Activated B cell treated with CpG ODN at 0.5 μM for 24 hours (primary cell): ENCODE measurements at regions of chr16 and their contacts with region 1.

Region 1: DNA sequence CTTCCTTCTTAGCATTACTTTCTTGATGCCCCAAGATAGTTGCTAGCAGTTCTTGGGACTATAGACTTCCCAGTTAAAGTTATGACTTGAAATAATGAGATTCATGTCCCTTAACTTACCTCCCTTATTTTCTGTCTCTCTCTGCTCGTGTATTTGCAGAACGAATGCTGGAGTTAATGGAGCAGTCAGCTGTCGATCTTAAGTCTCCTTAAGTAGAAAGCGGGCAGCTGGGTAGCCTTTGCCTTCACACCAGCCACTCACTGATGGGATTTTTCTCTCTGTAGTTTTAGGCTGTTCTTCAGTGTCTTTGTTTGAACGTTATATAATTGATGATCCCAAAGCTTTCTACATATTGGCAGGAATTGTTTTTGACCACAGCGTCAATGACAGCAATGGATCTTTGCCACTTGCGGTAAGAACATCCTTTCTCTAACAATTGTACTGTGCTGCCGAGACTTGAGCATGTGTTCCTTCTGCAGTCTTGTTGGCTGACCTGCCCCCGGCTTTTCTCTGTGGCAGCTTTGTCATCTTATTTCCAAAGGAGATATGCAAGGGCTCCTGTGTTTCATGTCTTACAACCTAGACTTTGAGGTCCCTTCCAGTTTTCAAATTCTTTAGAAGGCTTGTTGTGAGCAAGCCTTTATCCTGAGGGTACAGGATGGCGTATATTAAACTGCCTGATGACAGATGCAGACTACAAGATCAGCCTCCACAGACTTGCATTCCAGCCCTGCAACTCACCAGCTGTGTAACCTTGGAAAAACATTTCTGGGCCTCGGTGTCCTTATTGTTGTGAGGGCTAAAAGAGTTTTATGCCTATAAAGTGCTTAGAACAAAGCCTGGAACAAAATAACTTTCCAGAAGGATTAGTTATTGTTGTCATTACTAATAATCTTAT is 25.1 kb upstream of the ABCA3 start:
- DNase-seq: no peak
- ATAC-seq: no peak
- H3K4me3 Mint-ChIP-seq: no peak overlapping the region
- H3K27ac Mint-ChIP-seq: no peak overlapping the region
- H3K4me1 Mint-ChIP-seq: no peaks in the 10 kb centered on the region
- H3K27me3 Mint-ChIP-seq: peaks cover 38% of the 10 kb centered on the region
- CTCF ChIP-seq: no peak

Region 2: DNA sequence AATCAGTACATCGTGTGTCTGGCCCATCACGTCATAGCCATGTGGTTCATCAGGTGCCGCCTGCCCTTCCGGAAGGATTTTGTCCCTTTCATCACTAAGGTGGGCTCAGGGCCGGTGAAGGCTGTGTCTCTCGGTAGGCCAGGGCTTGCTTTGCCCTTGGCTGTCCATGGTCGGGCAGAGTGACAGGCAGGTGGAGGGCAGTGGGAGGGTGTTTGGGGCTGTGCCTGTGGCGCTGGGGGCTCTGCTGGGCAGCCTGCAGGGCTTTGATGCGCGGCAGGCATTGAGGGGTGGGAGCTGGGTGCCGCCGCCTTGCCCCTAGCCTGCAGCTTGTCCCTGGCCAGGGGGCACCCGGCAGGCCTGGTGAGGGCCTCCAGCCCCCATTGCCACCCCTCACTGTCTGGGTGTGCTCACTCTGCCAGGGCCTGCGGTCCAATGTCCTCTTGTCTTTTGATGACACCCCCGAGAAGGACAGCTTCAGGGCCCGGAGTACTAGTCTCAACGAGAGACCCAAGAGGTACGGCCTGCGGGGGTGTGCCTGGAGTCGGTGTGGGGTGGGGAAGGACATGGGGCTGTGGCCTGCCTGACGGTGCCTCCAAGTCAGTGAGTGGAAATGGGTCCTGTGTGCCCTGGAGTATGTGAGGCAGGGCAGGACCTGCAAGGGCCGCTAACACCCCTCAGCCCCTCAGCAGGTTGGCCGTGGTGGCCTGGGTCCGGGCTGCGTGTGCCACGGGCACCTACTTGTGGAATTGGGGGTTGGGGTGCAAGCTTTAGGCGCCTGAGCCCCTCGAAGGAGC is 289.4 kb before region 1 on chr16:
- CTCF ChIA-PET with region 1: no interaction called
- POLR2A ChIA-PET with region 1: interaction called, 11 read pairs
- intact Hi-C with region 1: no loop called
- DNase-seq: no peak
- ATAC-seq: no peak
- H3K4me3 Mint-ChIP-seq: no peak overlapping the region
- H3K27ac Mint-ChIP-seq: no peak overlapping the region
- H3K4me1 Mint-ChIP-seq: no peaks in the 10 kb centered on the region
- H3K27me3 Mint-ChIP-seq: no peaks in the 10 kb centered on the region
- CTCF ChIP-seq: no peak

Region 3: GRCh38 chr16:2095315-2095853 is 270.3 kb before region 1 on chr16:
- CTCF ChIA-PET with region 1: no interaction called
- POLR2A ChIA-PET with region 1: no interaction called
- intact Hi-C with region 1: no loop called
- DNase-seq: no peak
- ATAC-seq: no peak
- H3K4me3 Mint-ChIP-seq: no peak overlapping the region
- H3K27ac Mint-ChIP-seq: no peak overlapping the region
- H3K4me1 Mint-ChIP-seq: no peaks in the 10 kb centered on the region
- H3K27me3 Mint-ChIP-seq: no peaks in the 10 kb centered on the region
- CTCF ChIP-seq: no peak

Region 4: DNA sequence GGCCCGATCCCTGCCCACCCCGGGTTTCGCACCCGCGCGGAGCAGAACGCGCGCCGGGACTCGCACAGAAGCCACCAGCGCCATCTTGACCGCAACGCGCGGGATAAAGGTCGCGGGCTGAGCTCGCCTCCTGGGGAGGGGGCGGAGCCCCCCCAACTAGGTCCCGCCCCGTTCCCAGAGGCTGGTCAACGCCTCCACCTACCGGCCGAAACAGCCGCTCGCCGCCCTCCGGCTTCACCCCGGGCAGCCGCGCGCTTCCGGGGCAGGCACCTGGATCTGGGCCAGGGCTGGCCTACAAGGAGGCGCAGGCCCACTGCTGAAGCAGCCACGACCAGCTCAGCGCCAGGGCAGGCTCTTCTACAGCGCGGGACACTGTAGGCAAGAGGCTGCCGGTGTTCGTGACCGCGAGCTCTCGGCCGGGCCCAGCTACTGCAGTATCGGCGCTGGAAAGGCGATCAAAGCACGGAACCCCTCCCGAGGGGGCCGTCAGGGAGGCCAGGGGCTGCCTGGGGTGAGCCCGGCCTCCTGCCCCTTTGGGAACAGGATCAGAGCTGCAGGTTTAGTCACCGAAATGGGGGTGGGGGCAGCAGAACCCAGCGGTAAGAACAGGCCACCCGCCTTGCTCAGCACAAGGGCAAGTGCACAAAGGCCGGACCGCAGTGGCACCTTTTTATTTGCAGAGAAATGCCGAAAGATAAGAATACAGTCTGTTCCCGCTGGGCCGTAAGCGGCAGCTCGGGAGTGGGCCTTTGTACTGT is 114.0 kb before region 1 on chr16 and contains the start of gene ECI1:
- CTCF ChIA-PET with region 1: no interaction called
- POLR2A ChIA-PET with region 1: no interaction called
- intact Hi-C with region 1: no loop called
- DNase-seq: peak; percentile 85
- ATAC-seq: peak; percentile 90
- H3K4me3 Mint-ChIP-seq: peak within 1 kb of the TSS; percentile 86
- H3K27ac Mint-ChIP-seq: peak within 1 kb of the TSS; percentile 90
- H3K4me1 Mint-ChIP-seq: peaks cover 35% of the 10 kb centered on the region
- H3K27me3 Mint-ChIP-seq: no peaks in the 10 kb centered on the region
- CTCF ChIP-seq: no peak
- total RNA-seq, gene ECI1: 38.1 and 43.0 TPM in 2 replicates